Activated naive CD4-positive, alpha-beta T cell treated with anti-CD3 and anti-CD28 coated beads for 36 hours (primary cell): ENCODE measurements at regions of chr2 and their contacts with region 1.

Region 1: GRCh38 chr2:157302492-157303099 is 23.0 kb downstream of the ERMN start:
- DNase-seq: peak; percentile 51
- H3K4me3 Mint-ChIP-seq: peak overlapping the region; percentile 3
- H3K27ac Mint-ChIP-seq: no peak overlapping the region
- H3K4me1 Mint-ChIP-seq: peaks cover 34% of the 10 kb centered on the region
- H3K27me3 Mint-ChIP-seq: no peaks in the 10 kb centered on the region

Region 2: GRCh38 chr2:157291009-157291408 is 11.6 kb before region 1 on chr2:
- CTCF ChIA-PET with region 1: interaction called, 10 read pairs
- intact Hi-C with region 1: no loop called
- DNase-seq: no peak
- H3K4me3 Mint-ChIP-seq: no peak overlapping the region
- H3K27ac Mint-ChIP-seq: no peak overlapping the region
- H3K4me1 Mint-ChIP-seq: peaks cover 4% of the 10 kb centered on the region
- H3K27me3 Mint-ChIP-seq: peaks cover 5% of the 10 kb centered on the region

Region 3: GRCh38 chr2:157492189-157492773 is 189.7 kb after region 1 on chr2:
- CTCF ChIA-PET with region 1: interaction called, 142 read pairs
- intact Hi-C with region 1: loop called (anchors 1 kb)
- DNase-seq: peak; percentile 89
- H3K4me3 Mint-ChIP-seq: no peak overlapping the region
- H3K27ac Mint-ChIP-seq: no peak overlapping the region
- H3K4me1 Mint-ChIP-seq: peaks cover 62% of the 10 kb centered on the region
- H3K27me3 Mint-ChIP-seq: no peaks in the 10 kb centered on the region

Region 4: GRCh38 chr2:157603198-157603597 is 300.6 kb after region 1 on chr2:
- CTCF ChIA-PET with region 1: interaction called, 95 read pairs
- intact Hi-C with region 1: no loop called
- DNase-seq: no peak
- H3K4me3 Mint-ChIP-seq: no peak overlapping the region
- H3K27ac Mint-ChIP-seq: no peak overlapping the region
- H3K4me1 Mint-ChIP-seq: peaks cover 2% of the 10 kb centered on the region
- H3K27me3 Mint-ChIP-seq: no peaks in the 10 kb centered on the region

Region 5: DNA sequence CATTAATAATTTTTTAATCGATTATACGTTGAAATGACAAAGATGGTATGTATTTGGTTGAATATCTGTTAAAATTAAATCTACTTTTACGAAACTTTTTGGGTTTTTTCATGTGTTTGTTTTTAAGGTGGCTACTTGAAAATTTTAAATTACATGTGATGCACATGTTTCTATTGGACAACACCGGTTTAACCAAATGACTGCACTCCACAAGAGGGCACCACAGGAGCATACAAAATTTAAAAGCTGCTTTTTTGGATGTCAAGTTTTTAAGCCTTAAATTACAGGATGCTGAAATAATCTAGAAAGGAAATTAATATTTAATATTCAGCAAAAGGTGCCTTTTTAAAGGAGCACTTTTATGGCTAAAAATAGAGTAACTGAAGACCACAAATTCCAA is 474.8 kb after region 1 on chr2:
- CTCF ChIA-PET with region 1: interaction called, 16 read pairs
- intact Hi-C with region 1: loop called (anchors 2 kb)
- DNase-seq: peak; percentile 80
- H3K4me3 Mint-ChIP-seq: no peak overlapping the region
- H3K27ac Mint-ChIP-seq: no peak overlapping the region
- H3K4me1 Mint-ChIP-seq: peaks cover 12% of the 10 kb centered on the region
- H3K27me3 Mint-ChIP-seq: no peaks in the 10 kb centered on the region

Region 6: DNA sequence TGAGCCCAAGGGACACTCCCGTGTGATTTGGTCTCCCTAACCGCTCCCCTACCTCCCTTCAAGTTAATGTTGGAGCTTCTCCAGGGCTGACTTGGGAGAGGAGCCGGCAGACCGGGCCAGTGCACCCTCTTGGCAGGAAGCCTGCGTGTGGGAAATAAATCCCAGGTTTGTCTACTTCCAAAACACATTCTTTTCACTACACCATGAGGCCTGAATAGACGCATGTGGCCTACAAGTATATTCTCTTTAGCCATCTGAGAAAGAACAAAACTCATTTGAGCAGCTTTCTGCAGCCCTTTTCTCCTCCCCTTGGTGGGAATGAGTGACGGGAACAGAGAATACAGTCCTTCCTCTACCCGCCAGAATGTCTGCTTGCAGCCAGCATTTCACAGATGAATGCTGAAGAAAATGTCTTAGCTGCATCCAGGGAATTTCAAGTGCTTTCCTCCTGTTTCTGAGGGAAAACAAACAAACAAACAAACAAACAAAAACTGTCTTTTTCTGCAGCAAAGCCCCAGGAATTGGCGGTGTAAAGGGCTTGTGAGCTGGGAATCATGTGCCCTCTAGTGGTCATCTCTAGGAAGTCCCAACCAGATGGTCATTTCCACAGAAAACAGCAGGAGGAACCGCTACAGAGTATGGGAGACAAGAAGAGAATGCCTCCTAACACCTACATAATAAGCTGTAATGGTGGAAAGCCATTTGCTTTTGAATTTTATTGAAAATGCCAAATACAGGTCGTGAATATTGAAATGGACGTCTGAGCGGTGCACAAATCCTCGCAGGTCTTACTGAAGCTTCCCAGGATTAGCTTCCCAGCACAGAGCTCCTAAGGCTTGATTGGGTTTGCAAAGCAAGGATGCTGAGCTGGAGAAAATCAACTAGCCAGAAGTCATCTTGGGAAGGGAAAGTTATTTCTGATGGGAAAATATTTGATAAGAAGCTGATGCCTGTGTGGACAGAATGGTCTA is 1451.3 kb after region 1 on chr2:
- CTCF ChIA-PET with region 1: interaction called, 4 read pairs
- intact Hi-C with region 1: loop called (anchors 5 kb)
- DNase-seq: peak; percentile 42
- H3K4me3 Mint-ChIP-seq: no peak overlapping the region
- H3K27ac Mint-ChIP-seq: no peak overlapping the region
- H3K4me1 Mint-ChIP-seq: no peaks in the 10 kb centered on the region
- H3K27me3 Mint-ChIP-seq: peaks cover 3% of the 10 kb centered on the region